GM13977 (cell line): ENCODE measurements at regions of chr2 and their contacts with region 1.

Region 1: DNA sequence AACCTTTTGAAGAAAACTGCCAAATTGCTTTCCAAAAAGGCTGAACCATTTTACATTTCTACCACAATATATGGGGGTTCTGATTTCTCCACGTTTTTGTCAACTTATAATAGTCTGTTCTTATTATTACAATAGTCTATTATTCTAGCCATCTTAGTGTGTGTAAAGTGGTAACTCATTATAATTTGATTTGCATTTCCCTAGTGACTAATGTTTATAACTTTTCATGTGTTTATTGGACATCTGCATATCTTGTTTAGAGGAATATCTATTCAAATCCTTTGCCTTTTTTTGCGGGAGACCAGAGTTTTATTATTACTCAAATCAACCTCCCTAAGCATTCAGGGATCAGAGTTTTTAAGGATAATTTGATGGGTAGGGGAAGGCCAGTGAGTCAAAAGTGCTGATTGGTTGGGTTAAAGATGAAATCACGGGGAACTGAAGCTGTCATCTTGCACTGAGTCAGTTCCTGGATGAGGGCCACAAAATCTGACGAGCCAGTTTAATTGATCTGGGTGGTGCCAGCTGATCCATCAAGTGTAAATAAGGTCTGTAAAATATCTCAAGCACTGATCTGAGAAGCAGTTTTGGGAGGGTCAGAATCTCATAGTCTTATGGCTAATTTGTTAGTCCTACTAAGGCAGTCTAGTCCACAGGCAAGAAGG is 303.4 kb upstream of the NCKAP5 start:
- DNase-seq: no peak
- CTCF ChIP-seq: no peak

Region 2: DNA sequence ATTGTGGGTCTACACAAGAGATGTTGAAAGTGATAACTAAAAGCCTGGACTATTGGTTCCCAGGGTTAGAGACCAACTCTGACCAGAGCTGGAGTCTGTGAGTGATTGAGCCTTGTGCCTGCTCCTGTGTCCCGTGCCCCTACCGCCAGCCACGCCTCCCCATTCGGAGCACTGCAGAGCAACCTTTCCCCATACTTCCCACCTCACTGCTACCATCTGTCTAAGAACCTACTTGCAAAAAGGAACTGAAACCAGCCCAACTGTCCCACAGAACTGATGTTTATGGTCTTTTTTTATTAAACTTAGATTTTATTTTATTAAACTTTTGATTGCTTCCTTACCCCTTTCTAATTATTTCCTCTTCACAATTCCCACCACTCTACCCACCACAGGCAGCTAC is 81.8 kb after region 1 on chr2:
- in situ Hi-C with region 1: loop called (anchors 25 kb)
- DNase-seq: no peak
- CTCF ChIP-seq: no peak

Region 3: DNA sequence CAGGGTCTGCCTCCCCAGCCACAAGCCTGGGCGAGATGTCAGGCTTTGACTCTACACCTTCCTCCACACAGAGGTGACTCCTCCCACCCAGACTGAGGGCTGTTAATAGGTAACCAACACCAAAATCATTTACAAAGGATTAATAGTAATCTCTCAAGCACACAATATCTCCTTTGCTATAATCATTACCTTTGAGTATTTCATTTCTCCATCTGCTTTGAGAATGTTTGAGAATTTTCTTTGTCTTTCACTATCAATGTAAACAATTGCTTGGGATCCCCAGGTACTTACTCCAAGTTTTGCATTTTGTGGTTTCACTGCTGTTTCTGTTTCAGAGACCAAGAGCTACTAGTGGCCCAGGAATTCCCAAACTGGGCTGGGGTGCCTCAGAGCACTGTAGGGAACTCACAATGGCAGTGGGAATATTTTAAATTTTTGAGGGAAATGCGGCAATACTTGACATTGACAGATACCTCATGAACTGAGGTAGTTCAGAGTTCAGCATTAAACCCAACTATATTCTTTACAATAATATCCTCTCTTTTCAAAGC is 215.8 kb after region 1 on chr2:
- in situ Hi-C with region 1: loop called (anchors 25 kb)
- DNase-seq: peak; percentile 41
- CTCF ChIP-seq: no peak

Region 4: DNA sequence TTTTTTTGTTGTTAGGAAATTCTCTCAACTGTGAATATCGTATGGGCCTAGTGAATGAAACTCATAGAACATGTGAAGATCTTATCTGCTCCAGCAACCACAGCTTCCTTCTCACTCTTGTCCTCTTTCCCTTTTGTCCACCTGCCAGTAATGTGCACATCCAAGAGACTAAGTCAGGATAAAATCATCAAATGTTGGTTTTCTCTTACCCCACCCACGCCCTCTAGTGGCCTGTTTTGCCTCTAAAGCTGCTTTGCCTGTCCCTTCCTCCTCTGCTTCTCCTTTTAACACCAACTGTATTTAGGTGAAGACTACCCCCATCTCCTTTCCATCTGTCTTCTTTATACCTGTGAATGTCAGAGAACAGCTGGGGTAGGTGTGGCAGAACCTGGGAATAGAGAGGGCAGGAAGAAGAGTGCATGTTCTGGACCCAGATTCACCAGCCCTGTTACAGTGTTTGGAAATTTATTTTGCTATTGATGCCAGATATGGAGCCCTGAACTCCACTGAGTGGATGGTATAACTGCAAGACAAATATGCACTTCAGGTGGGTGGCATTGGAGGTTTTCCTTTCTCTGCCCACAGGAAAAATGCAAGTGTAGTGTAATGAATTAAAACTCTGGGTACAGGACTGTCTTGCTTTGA is 373.8 kb after region 1 on chr2:
- in situ Hi-C with region 1: loop called (anchors 25 kb)
- DNase-seq: peak; percentile 33
- CTCF ChIP-seq: peak; percentile 79

Region 5: GRCh38 chr2:134446383-134447017 is 574.8 kb after region 1 on chr2:
- in situ Hi-C with region 1: loop called (anchors 25 kb)
- DNase-seq: no peak
- CTCF ChIP-seq: no peak